CD14-positive monocyte (primary cell): ENCODE measurements at regions of chr20 and their contacts with region 1.

Region 1: DNA sequence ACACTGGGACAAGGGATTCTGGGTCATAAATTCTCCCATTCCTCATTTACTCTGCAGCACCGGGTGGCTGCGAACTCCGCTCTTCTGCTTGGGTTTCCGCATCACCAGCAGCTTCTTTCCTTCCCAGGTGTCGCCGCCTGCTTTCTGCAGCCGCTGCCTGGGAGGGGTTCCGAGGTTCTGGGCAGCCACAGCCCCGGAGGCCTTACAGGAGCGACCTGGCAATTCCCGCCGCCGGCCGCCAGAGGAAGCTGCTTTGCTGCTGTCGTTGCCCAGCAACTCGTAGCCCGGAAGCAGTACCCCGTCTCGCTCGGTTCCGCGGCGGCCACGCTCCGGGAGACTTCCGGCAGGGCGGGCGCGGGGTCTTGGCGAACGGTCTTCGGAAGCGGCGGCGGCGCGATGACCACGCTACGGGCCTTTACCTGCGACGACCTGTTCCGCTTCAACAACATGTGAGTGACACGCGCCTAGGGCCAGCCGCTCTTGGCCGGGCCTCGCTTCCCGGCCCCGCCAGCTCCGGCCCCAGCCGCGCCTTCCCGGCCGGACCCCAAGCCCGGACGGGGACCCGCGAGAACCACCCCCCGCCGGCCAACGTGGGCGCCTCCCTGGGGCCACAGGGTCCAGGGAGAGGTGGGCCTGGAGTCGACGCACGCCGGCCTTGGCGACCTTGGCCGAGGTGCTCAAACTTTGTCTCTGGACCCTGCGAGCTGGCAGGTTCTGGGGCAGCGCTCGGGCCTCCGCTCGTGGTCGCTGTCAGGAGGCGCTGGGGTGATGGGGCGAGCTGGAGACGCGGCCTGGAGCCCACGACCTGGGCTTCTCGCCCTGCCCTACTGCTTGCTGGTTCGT is at the start of gene NAA20:
- DNase-seq: peak; percentile 85 to 89 (median 89)
- H3K4me3 ChIP-seq: peak within 1 kb of the TSS; percentile 67 to 93 (median 78)
- H3K4me3 Mint-ChIP-seq: peak within 1 kb of the TSS; percentile 87 to 93
- H3K27ac ChIP-seq: peak within 1 kb of the TSS; percentile 14 to 84
- H3K27ac Mint-ChIP-seq: peak within 1 kb of the TSS; percentile 74 to 95 (median 88)
- H3K4me1 ChIP-seq: peaks cover 32 to 39% of the 10 kb centered on the region in 2 donors
- H3K4me1 Mint-ChIP-seq: peaks cover 50% of the 10 kb centered on the region
- H3K27me3 ChIP-seq: no peaks in the 10 kb centered on the region
- H3K27me3 Mint-ChIP-seq: peaks cover 0 to 2% (median 0%) of the 10 kb centered on the region in 3 donors
- CTCF ChIP-seq: peak; percentile 69
- polyA plus RNA-seq, gene NAA20: 39.4 to 103 (median 94.0) TPM

Region 2: GRCh38 chr20:19757487-19758132 is 259.6 kb before region 1 on chr20:
- intact Hi-C with region 1: no loop called
- DNase-seq: peak; percentile 73 to 85 (median 84)
- H3K4me3 ChIP-seq: peak overlapping the region; percentile 58 to 88 (median 66)
- H3K4me3 Mint-ChIP-seq: peak overlapping the region; percentile 94 to 98
- H3K27ac ChIP-seq: peak overlapping the region; percentile 94 to 97
- H3K27ac Mint-ChIP-seq: peak overlapping the region; percentile 89 to 98 (median 94)
- H3K4me1 ChIP-seq: peaks cover 35 to 39% of the 10 kb centered on the region in 2 donors
- H3K4me1 Mint-ChIP-seq: peaks cover 36% of the 10 kb centered on the region
- H3K27me3 ChIP-seq: no peaks in the 10 kb centered on the region
- H3K27me3 Mint-ChIP-seq: peaks cover 3 to 8% (median 4%) of the 10 kb centered on the region in 3 donors
- CTCF ChIP-seq: no peak

Region 3: GRCh38 chr20:19807191-19807945 is 209.9 kb before region 1 on chr20:
- intact Hi-C with region 1: no loop called
- DNase-seq: no peak
- H3K4me3 ChIP-seq: no peak overlapping the region
- H3K4me3 Mint-ChIP-seq: no peak overlapping the region
- H3K27ac ChIP-seq: no peak overlapping the region
- H3K27ac Mint-ChIP-seq: no peak overlapping the region
- H3K4me1 ChIP-seq: peaks cover 0 to 2% of the 10 kb centered on the region in 2 donors
- H3K4me1 Mint-ChIP-seq: peaks cover 10% of the 10 kb centered on the region
- H3K27me3 ChIP-seq: no peaks in the 10 kb centered on the region
- H3K27me3 Mint-ChIP-seq: peaks cover 0 to 2% (median 0%) of the 10 kb centered on the region in 3 donors
- CTCF ChIP-seq: no peak

Region 4: DNA sequence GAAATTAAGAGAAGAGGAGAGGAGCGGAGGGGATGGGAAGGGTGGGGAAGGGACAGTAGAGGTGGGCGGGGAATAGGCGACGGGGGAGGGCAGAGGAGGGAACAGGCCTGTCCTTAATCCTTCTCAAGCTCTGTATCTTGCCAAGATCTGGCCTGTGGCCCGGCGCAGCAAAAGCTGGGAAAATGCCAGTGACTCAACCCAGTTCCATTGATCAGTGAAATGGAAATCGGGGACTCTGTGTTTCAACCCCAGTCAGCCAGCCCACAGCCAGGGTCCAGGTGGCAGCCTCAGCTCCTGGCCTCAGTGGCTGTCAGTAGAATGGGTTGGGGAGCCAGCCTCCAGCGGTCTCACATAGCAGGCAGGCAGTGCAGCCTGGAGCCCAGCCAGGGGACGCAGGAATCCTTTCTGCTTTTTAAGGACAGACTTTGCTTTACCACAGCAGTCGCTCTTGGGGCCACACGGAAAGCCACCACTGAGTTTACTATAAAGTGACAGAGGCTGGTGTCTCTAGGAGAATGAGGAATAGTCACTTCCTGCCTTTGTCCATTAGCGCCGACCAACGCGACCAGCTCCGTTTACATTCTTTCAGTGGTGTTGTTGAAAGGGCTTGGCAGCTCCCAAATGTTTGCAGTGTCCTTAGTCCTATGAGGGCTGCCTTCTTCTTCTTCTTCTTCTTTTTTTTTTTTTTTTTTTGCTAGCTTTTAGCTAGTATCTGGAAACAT is 131.1 kb before region 1 on chr20:
- intact Hi-C with region 1: no loop called
- DNase-seq: peak in 1 of 3 donors; percentile 22
- H3K4me3 ChIP-seq: peak overlapping the region in 1 of 3 experiments; percentile 4
- H3K4me3 Mint-ChIP-seq: no peak overlapping the region
- H3K27ac ChIP-seq: no peak overlapping the region
- H3K27ac Mint-ChIP-seq: peak overlapping the region in 5 of 7 donors; percentile 36 to 72 (median 57)
- H3K4me1 ChIP-seq: peaks cover 26 to 31% of the 10 kb centered on the region in 2 donors
- H3K4me1 Mint-ChIP-seq: peaks cover 41% of the 10 kb centered on the region
- H3K27me3 ChIP-seq: no peaks in the 10 kb centered on the region
- H3K27me3 Mint-ChIP-seq: peaks cover 0 to 7% (median 5%) of the 10 kb centered on the region in 3 donors
- CTCF ChIP-seq: no peak

Region 5: DNA sequence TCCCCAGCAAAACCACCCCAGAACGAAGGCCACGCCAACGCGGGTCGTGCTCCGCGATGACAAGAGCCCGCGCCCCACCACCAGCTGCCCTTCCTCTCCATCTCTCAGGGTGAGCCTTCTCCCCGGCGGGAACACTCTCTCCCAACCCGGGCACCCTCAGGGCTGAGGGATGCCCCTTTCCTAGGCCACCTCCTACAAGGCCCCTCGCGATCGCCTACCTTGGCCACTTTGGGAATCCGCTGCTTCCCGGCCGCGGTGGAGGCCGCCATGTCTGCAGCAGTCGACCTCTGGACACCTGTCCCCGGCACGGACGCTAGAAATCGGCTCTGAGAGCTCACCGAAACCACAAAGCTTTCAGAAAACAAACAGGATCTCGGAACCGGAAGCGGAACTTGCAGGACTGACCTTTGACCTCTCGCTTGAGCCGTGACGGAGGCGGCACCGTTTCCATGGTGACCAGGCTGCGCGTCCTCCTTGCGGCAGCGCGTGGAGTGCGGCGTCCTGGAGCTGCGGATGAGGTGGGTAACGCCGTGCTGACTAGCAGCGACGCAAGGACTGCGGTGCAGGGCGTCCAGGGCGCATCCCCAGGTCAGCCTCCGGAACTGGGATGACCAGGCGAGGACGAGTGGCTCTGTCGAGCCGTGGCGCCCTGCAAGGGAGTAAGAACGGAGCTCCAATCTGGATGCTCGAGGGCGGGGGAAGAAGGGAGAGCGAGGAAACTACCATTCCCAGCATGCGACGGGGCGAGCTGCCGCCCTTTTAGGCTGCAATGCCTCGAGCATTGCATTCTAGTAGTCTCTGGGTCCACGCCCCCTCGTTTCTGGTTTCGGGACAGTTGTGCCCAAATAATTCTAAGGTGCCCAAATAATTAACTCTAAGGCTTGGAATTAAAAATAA is 35.1 kb after region 1 on chr20 and contains the starts of genes CFAP61 and CRNKL1:
- intact Hi-C with region 1: loop called in 1 of 2 experiments (anchors 1 kb)
- DNase-seq: peak; percentile 95 to 98 (median 98)
- H3K4me3 ChIP-seq: peak within 1 kb of the TSS; percentile 81 to 96 (median 91)
- H3K4me3 Mint-ChIP-seq: peak within 1 kb of the TSS; percentile 99
- H3K27ac ChIP-seq: peak within 1 kb of the TSS; percentile 76 to 92
- H3K27ac Mint-ChIP-seq: peak within 1 kb of the TSS; percentile 96 to 98 (median 98)
- H3K4me1 ChIP-seq: peaks cover 17 to 21% of the 10 kb centered on the region in 2 donors
- H3K4me1 Mint-ChIP-seq: peaks cover 19% of the 10 kb centered on the region
- H3K27me3 ChIP-seq: no peaks in the 10 kb centered on the region
- H3K27me3 Mint-ChIP-seq: peaks cover 0 to 1% (median 0%) of the 10 kb centered on the region in 3 donors
- CTCF ChIP-seq: no peak
- polyA plus RNA-seq, gene CFAP61: not detected
- polyA plus RNA-seq, gene CRNKL1: 4.0 to 7.4 (median 5.9) TPM